ENCODE measurements at regions of chr12 and their contacts with region 1.

Region 1: GRCh38 chr12:22459838-22460490 is 84.4 kb downstream of the C2CD5 start:
- DNase-seq: no peak
- ATAC-seq: peak; percentile 62
- H3K4me3 Mint-ChIP-seq: no peak overlapping the region
- H3K27ac Mint-ChIP-seq: no peak overlapping the region
- H3K4me1 Mint-ChIP-seq: peaks cover 4% of the 10 kb centered on the region
- H3K27me3 Mint-ChIP-seq: no peaks in the 10 kb centered on the region
- CTCF ChIP-seq: peak; percentile 66

Region 2: DNA sequence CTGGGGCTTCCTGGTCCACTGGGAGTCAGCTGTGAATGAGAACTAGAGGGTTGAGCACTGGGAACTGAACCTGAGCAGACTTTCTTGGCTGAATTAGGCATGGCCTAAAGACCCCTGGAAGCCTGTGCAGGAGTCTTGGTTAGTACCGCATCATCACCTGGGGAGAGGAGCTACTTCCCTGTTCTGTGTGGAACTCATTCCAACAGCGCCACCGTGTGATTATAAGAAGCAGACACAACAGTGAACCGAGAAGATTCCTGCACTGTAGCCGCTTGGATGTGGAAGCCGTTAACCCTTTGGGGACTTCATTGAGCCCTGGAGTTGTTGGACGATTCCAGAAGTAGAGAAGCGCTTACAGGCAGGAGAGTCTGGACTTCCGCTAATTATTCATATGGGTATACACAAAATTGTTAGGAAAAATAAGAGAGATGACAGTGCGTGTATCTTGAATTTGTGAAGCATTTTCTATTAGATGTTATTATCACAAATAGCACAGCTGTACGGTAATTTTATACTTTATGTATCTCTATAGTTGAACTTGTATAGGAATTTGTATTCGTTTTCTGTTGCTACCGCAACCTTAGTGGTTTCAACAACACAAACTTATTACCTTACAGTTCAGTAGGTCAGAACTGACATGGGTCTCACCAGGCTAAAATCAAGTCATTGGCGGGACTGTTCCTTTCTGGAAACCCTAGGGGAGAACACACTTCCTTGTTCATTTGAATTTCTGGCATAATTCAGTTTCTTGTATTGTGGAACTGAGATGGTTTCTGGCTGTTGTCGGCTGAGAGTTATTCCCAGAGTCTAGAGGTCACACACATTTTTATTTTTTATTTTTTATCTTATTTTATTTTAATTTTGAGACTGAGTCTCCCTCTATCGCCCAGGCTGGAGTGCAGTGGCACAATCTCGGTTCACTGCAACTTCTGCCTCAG is 16.3 kb before region 1 on chr12:
- CTCF ChIA-PET with region 1: interaction called, 10 read pairs
- POLR2A ChIA-PET with region 1: no interaction called
- intact Hi-C with region 1: no loop called
- DNase-seq: peak; percentile 68
- ATAC-seq: peak; percentile 99
- H3K4me3 Mint-ChIP-seq: no peak overlapping the region
- H3K27ac Mint-ChIP-seq: no peak overlapping the region
- H3K4me1 Mint-ChIP-seq: no peaks in the 10 kb centered on the region
- H3K27me3 Mint-ChIP-seq: no peaks in the 10 kb centered on the region
- CTCF ChIP-seq: peak; percentile 77

Region 3: GRCh38 chr12:22533155-22533554 is 73.2 kb after region 1 on chr12:
- CTCF ChIA-PET with region 1: no interaction called
- POLR2A ChIA-PET with region 1: no interaction called
- intact Hi-C with region 1: no loop called
- DNase-seq: no peak
- ATAC-seq: peak; percentile 51
- H3K4me3 Mint-ChIP-seq: no peak overlapping the region
- H3K27ac Mint-ChIP-seq: no peak overlapping the region
- H3K4me1 Mint-ChIP-seq: peaks cover 40% of the 10 kb centered on the region
- H3K27me3 Mint-ChIP-seq: no peaks in the 10 kb centered on the region
- CTCF ChIP-seq: no peak

Region 4: GRCh38 chr12:22544038-22544979 is 84.3 kb after region 1 on chr12 and contains the start of gene C2CD5:
- CTCF ChIA-PET with region 1: no interaction called
- POLR2A ChIA-PET with region 1: no interaction called
- intact Hi-C with region 1: no loop called
- DNase-seq: peak; percentile 97
- ATAC-seq: peak; percentile 91
- H3K4me3 Mint-ChIP-seq: peak within 1 kb of the TSS; percentile 95
- H3K27ac Mint-ChIP-seq: peak within 1 kb of the TSS; percentile 94
- H3K4me1 Mint-ChIP-seq: peaks cover 30% of the 10 kb centered on the region
- H3K27me3 Mint-ChIP-seq: peaks cover 6% of the 10 kb centered on the region
- CTCF ChIP-seq: no peak
- total RNA-seq, gene C2CD5: 32.4 to 34.1 TPM

Region 5: GRCh38 chr12:22781339-22781738 is 321.4 kb after region 1 on chr12:
- CTCF ChIA-PET with region 1: no interaction called
- POLR2A ChIA-PET with region 1: no interaction called
- intact Hi-C with region 1: no loop called
- DNase-seq: peak; percentile 2
- ATAC-seq: no peak
- H3K4me3 Mint-ChIP-seq: no peak overlapping the region
- H3K27ac Mint-ChIP-seq: no peak overlapping the region
- H3K4me1 Mint-ChIP-seq: no peaks in the 10 kb centered on the region
- H3K27me3 Mint-ChIP-seq: peaks cover 9% of the 10 kb centered on the region
- CTCF ChIP-seq: no peak

Measured in activated CD8-positive, alpha-beta T cell treated with anti-CD3 and anti-CD28 coated beads for 36 hours (primary cell).